Caco-2 (cell line): ENCODE measurements at regions of chr6 and their contacts with region 1.

Region 1: DNA sequence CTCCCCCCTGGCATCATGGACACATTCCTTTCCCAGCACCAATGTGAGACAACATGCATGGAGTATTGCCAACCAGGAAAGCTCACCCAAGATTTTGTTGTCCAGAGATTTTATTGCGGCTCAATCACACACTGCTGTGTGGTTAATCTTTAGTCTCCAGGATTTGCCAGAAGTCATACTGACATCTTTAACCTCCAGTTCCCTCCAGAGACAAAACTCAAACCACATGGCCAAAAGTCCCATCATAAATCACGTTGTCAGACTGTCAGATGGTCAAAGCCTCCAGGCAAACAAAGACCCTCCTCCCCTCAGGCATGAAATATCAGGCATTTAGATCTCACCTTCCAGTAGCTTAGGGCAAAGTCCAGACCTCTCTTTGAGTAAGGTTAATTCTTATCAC is 97.3 kb upstream of the OPRM1 start:
- DNase-seq: peak; percentile 78 to 83
- H3K4me3 ChIP-seq: no peak overlapping the region
- H3K4me3 Mint-ChIP-seq: no peak overlapping the region
- H3K27ac Mint-ChIP-seq: peak overlapping the region; percentile 13
- H3K4me1 ChIP-seq: peaks cover 34% of the 10 kb centered on the region
- H3K4me1 Mint-ChIP-seq: peaks cover 15% of the 10 kb centered on the region
- H3K27me3 ChIP-seq: no peaks in the 10 kb centered on the region
- H3K27me3 Mint-ChIP-seq: no peaks in the 10 kb centered on the region
- CTCF ChIP-seq: no peak

Region 2: DNA sequence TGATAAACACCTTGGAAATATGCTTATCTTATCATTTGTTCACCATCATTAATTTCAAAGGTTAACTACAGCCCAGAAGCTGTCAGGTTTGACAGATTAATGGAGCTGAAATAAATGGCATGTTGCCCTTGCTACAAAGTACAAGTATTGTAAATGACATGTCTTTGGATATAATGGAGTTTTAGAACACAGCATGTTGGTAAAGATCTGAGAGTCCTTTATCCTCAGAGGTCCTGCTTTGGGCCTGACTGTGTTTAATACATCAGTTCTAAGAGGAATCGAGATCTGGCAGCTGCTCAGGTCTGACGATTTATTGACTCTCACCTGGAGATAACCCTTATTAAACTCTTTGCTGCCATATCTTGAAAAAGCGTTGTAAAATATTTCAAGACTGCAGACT is 125.4 kb before region 1 on chr6:
- CTCF ChIA-PET with region 1: no interaction called
- POLR2A ChIA-PET with region 1: no interaction called
- intact Hi-C with region 1: loop called (anchors 5 kb)
- DNase-seq: peak; percentile 4 to 48
- H3K4me3 ChIP-seq: no peak overlapping the region
- H3K4me3 Mint-ChIP-seq: no peak overlapping the region
- H3K27ac Mint-ChIP-seq: no peak overlapping the region
- H3K4me1 ChIP-seq: peaks cover 4% of the 10 kb centered on the region; the same call in 1 of the 2 replicates
- H3K4me1 Mint-ChIP-seq: no peaks in the 10 kb centered on the region
- H3K27me3 ChIP-seq: no peaks in the 10 kb centered on the region
- H3K27me3 Mint-ChIP-seq: no peaks in the 10 kb centered on the region
- CTCF ChIP-seq: no peak

Region 3: DNA sequence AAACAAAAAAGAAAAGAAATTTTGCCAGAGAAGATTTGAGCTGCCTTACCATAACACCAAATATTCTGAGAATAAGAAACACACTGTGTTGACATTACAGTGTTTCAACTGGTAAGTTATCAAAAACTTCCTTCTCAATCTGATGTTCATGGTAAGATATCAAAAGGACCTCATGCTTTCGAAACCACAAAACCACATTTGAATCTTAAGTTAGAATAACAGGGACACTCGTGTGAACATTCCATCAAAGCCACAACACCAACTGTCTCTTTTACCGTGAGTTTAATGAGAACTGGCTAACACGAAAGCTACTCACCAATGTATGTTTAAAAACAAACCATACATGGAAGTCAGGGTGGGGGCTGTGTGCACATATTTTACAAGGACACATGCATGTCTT is 24.2 kb after region 1 on chr6:
- CTCF ChIA-PET with region 1: no interaction called
- POLR2A ChIA-PET with region 1: no interaction called
- intact Hi-C with region 1: no loop called
- DNase-seq: no peak
- H3K4me3 ChIP-seq: no peak overlapping the region
- H3K4me3 Mint-ChIP-seq: no peak overlapping the region
- H3K27ac Mint-ChIP-seq: no peak overlapping the region
- H3K4me1 ChIP-seq: no peaks in the 10 kb centered on the region
- H3K4me1 Mint-ChIP-seq: no peaks in the 10 kb centered on the region
- H3K27me3 ChIP-seq: no peaks in the 10 kb centered on the region
- H3K27me3 Mint-ChIP-seq: peaks cover 4% of the 10 kb centered on the region
- CTCF ChIP-seq: no peak

Region 4: GRCh38 chr6:154058963-154059680 is 117.4 kb after region 1 on chr6:
- CTCF ChIA-PET with region 1: no interaction called
- POLR2A ChIA-PET with region 1: no interaction called
- intact Hi-C with region 1: no loop called
- DNase-seq: no peak
- H3K4me3 ChIP-seq: no peak overlapping the region
- H3K4me3 Mint-ChIP-seq: no peak overlapping the region
- H3K27ac Mint-ChIP-seq: no peak overlapping the region
- H3K4me1 ChIP-seq: no peaks in the 10 kb centered on the region
- H3K4me1 Mint-ChIP-seq: no peaks in the 10 kb centered on the region
- H3K27me3 ChIP-seq: no peaks in the 10 kb centered on the region
- H3K27me3 Mint-ChIP-seq: peaks cover 6% of the 10 kb centered on the region
- CTCF ChIP-seq: no peak